ENCODE measurements at regions of chr11 and their contacts with region 1.

Region 1: DNA sequence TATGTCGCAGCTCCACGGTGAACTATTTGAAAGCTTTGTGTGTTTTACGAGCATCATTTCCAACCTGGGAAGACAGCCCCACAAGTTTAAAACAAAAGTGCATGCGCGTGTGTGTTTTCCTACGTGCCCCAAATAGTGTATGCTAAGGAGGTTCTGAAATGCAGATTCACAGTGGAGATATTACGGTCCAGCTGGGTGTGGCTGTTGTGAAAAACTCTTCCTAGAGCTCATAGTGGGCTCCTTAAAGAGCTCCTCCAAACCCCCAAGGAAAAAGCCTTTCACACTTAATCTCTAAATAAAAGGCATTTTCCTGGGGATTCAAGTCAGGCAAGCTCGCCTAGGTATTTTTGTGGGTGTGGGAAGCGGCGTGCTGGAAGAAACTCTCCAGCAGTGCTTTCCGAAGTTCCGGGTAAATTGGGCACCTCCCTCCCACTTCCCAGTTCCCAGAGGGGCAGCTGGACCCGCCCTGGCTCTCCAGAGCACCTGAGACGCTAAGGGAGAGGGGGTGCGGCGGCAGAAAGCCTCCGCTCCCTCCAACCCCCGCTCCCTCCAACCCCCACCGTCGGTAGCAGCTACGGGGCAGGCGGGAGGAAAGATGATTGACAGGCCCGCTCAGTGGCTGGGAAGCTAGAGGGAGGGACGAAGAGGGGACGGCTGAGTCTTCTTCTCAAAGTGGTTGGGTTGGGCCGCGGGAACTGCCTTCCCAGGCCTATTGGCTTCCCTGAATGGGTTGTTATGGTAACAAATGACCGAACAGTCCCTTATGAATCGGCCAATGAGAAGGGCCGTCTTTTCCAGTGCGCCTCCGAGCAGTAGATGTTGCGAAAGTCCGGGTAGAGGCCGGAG is 558 bp upstream of the PCF11 start:
- DNase-seq: peak; percentile 100
- H3K4me3 ChIP-seq: peak overlapping the region; percentile 64
- H3K27ac ChIP-seq: peak overlapping the region; percentile 95
- H3K4me1 ChIP-seq: peaks cover 8% of the 10 kb centered on the region
- H3K27me3 ChIP-seq: no peaks in the 10 kb centered on the region
- CTCF ChIP-seq: no peak

Region 2: DNA sequence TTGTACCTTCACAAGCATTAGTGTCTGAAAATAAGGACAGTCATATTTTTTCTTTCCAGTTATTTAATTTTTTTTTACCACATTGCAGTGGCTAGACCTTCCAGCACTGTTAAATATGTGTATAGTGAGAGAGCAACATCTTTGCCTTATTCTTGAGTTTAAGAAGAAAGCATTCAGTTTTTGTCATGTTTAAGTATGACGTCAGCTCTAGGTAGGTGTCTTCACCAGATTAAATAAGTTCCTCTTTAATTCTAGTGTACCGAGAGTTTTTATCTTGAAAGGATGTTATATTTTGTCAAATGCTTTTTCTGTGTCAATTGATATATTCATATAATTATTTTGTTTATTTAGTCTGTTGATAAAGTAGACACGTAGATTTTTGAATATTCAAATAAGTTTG is 681.5 kb before region 1 on chr11:
- CTCF ChIA-PET with region 1: no interaction called
- POLR2A ChIA-PET with region 1: no interaction called
- intact Hi-C with region 1: no loop called
- DNase-seq: no peak
- H3K4me3 ChIP-seq: no peak overlapping the region
- H3K27ac ChIP-seq: no peak overlapping the region
- H3K4me1 ChIP-seq: no peaks in the 10 kb centered on the region
- H3K27me3 ChIP-seq: no peaks in the 10 kb centered on the region
- CTCF ChIP-seq: no peak

Region 3: GRCh38 chr11:82900277-82901164 is 255.9 kb before region 1 on chr11 and contains the start of gene PRCP:
- CTCF ChIA-PET with region 1: no interaction called
- POLR2A ChIA-PET with region 1: no interaction called
- intact Hi-C with region 1: loop called (anchors 2 kb)
- DNase-seq: peak; percentile 89
- H3K4me3 ChIP-seq: peak within 1 kb of the TSS; percentile 65
- H3K27ac ChIP-seq: peak within 1 kb of the TSS; percentile 64
- H3K4me1 ChIP-seq: peaks cover 22% of the 10 kb centered on the region
- H3K27me3 ChIP-seq: no peaks in the 10 kb centered on the region
- CTCF ChIP-seq: 0 out of 2 replicates have a peak, but pooled peaks have one; percentile 18
- total RNA-seq, gene PRCP: 25.1 and 28.8 TPM in 2 replicates

Region 4: DNA sequence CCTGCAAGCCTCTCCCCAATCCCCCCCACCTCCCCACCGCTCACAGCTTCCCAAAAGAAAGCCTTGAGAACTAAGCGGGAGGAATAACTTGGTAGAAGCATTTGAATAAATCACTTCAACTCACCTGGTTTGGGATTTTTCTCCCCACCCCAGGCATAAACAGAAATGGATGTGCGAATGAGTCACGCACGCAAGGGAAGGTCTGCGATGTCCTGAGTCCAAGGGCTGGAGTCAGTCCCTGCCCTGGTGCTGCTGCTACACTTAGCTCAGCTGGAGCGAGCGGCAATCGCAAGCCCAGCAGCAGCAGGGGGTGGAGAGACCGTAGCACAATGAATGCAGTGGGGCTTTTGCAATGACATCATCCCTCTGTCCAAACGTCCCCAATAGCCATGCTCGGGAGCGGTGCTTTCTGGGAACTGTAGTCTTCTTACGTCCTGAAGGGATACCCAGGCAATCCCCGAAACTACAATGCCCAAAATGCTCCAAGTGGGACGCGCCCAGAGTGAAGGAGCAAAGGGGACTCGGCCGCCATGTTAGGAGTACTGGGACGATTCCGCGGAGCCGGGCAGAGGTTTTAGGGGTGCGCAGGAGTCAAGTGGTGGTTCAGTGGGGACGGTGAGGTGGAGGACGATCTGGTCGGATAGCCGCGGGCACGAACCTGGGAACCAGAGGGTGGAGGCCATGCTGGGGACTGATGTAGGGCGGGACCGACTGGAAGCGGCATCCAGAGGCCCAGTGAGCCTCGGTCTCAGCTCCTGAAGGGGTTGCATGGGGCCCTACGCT is 84.6 kb before region 1 on chr11 and contains the start of gene RAB30:
- CTCF ChIA-PET with region 1: no interaction called
- POLR2A ChIA-PET with region 1: no interaction called
- intact Hi-C with region 1: loop called (anchors 2 kb)
- DNase-seq: peak; percentile 100
- H3K4me3 ChIP-seq: peak within 1 kb of the TSS; percentile 65
- H3K27ac ChIP-seq: peak within 1 kb of the TSS; percentile 85
- H3K4me1 ChIP-seq: peaks cover 7% of the 10 kb centered on the region
- H3K27me3 ChIP-seq: no peaks in the 10 kb centered on the region
- CTCF ChIP-seq: no peak
- total RNA-seq, gene RAB30: 11.6 and 15.0 TPM in 2 replicates

Region 5: GRCh38 chr11:83744620-83745192 is 588.3 kb after region 1 on chr11:
- CTCF ChIA-PET with region 1: no interaction called
- POLR2A ChIA-PET with region 1: no interaction called
- intact Hi-C with region 1: loop called (anchors 5 kb)
- DNase-seq: peak; percentile 48
- H3K4me3 ChIP-seq: no peak overlapping the region
- H3K27ac ChIP-seq: peak overlapping the region; percentile 78
- H3K4me1 ChIP-seq: peaks cover 18% of the 10 kb centered on the region
- H3K27me3 ChIP-seq: no peaks in the 10 kb centered on the region
- CTCF ChIP-seq: no peak